Naive thymus-derived CD4-positive, alpha-beta T cell (primary cell): ENCODE measurements at regions of chr10 and their contacts with region 1.

Region 1: GRCh38 chr10:93916257-93917063 is 22.7 kb downstream of the SLC35G1 start:
- DNase-seq: no peak
- ATAC-seq: no peak
- H3K4me3 ChIP-seq: no peak overlapping the region
- H3K4me3 Mint-ChIP-seq: peak overlapping the region in 3 of 10 donors; percentile 15 to 42 (median 40)
- H3K27ac ChIP-seq: no peak overlapping the region
- H3K27ac Mint-ChIP-seq: peak overlapping the region in 1 of 9 donors; percentile 67
- H3K4me1 ChIP-seq: no peaks in the 10 kb centered on the region
- H3K4me1 Mint-ChIP-seq: peaks cover 0 to 7% (median 2%) of the 10 kb centered on the region in 7 donors
- H3K27me3 ChIP-seq: no peaks in the 10 kb centered on the region
- H3K27me3 Mint-ChIP-seq: no peaks in the 10 kb centered on the region

Region 2: DNA sequence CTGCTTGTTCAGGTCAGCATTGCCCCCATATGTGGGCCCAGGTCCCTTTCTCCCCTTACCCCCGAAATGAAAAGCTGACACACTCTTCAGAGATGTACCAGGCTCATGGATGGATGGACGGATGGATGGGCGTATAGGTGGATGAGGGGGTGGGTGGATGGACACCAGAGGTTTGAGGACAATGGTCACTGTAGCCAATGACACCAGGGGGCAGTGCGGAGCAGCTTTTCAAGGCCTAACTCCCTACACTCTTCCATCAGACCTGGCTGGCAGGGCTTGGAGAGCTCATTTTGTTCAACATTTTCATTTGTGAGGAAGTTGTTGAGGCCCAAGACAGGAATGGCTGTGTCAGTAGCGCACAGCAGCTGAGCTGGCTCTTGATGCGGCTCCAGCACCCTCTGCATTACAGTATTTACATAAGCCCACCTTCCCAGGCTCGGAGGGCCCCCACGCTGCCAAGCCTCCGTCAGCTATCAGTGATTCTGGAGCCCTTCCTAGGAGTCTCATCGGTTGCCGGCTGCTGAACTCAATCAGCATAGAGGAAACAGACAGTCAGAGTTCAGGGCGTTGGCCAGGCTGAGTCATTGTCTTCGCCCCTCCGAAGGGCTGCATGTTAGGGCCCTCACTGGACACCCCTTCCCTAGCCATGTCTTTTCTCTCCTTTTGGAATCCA is 361.6 kb before region 1 on chr10:
- CTCF ChIA-PET with region 1: interaction called, 3 read pairs
- POLR2A ChIA-PET with region 1: no interaction called
- intact Hi-C with region 1: loop called in 1 of 2 experiments (anchors 2 kb)
- DNase-seq: peak in 4 of 9 donors; percentile 12 to 37 (median 22)
- ATAC-seq: peak; percentile 83
- H3K4me3 ChIP-seq: no peak overlapping the region
- H3K4me3 Mint-ChIP-seq: no peak overlapping the region
- H3K27ac ChIP-seq: no peak overlapping the region
- H3K27ac Mint-ChIP-seq: no peak overlapping the region
- H3K4me1 ChIP-seq: no peaks in the 10 kb centered on the region
- H3K4me1 Mint-ChIP-seq: peaks cover 0 to 5% (median 0%) of the 10 kb centered on the region in 7 donors
- H3K27me3 ChIP-seq: no peaks in the 10 kb centered on the region
- H3K27me3 Mint-ChIP-seq: peaks cover 0 to 18% (median 10%) of the 10 kb centered on the region in 5 donors

Region 3: GRCh38 chr10:93697207-93697606 is 219.3 kb before region 1 on chr10:
- CTCF ChIA-PET with region 1: no interaction called
- POLR2A ChIA-PET with region 1: no interaction called
- intact Hi-C with region 1: loop called in 1 of 2 experiments (anchors 1 kb)
- DNase-seq: no peak
- ATAC-seq: no peak
- H3K4me3 ChIP-seq: no peak overlapping the region
- H3K4me3 Mint-ChIP-seq: no peak overlapping the region
- H3K27ac ChIP-seq: no peak overlapping the region
- H3K27ac Mint-ChIP-seq: no peak overlapping the region
- H3K4me1 ChIP-seq: peaks cover 9 to 16% of the 10 kb centered on the region in 2 donors
- H3K4me1 Mint-ChIP-seq: peaks cover 9 to 40% (median 23%) of the 10 kb centered on the region in 7 donors
- H3K27me3 ChIP-seq: no peaks in the 10 kb centered on the region
- H3K27me3 Mint-ChIP-seq: no peaks in the 10 kb centered on the region

Region 4: DNA sequence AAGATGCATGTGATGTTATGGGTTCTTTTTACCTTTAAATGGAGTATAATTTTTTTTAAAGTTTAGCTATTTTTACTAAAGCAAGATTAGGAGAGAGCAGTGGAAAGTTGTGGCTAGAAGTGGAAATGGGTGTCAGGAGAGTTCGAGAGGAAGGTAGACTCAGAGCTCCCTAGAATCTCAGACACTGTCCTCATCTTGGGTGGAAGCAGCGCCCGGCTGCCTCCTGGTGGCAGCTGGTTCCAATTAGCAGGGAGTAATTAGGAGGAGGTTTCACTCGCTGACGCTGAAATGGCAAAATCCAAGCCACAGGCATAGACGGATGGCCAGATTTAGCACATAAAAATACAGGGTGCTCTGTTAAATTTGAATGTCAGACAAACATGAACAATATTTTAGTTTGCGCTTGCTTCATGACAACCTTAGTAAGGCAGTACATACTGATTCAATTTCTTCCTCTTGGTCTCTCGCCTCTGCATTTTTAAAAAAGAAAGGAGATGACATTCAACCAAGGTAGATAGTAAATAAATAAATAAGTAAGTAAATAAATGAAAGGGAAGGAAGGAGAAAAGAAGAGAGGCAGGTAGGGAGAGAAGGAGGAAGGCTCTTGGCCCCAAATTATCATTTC is 100.2 kb before region 1 on chr10:
- CTCF ChIA-PET with region 1: interaction called, 3 read pairs
- POLR2A ChIA-PET with region 1: no interaction called
- intact Hi-C with region 1: loop called in 1 of 2 experiments (anchors 5 kb)
- DNase-seq: peak in 6 of 9 donors; percentile 2 to 22 (median 8)
- ATAC-seq: peak; percentile 57
- H3K4me3 ChIP-seq: no peak overlapping the region
- H3K4me3 Mint-ChIP-seq: no peak overlapping the region
- H3K27ac ChIP-seq: no peak overlapping the region
- H3K27ac Mint-ChIP-seq: no peak overlapping the region
- H3K4me1 ChIP-seq: no peaks in the 10 kb centered on the region
- H3K4me1 Mint-ChIP-seq: peaks cover 0 to 13% (median 8%) of the 10 kb centered on the region in 7 donors
- H3K27me3 ChIP-seq: peaks cover 0 to 4% of the 10 kb centered on the region in 2 donors
- H3K27me3 Mint-ChIP-seq: peaks cover 35 to 50% (median 45%) of the 10 kb centered on the region in 5 donors

Region 5: DNA sequence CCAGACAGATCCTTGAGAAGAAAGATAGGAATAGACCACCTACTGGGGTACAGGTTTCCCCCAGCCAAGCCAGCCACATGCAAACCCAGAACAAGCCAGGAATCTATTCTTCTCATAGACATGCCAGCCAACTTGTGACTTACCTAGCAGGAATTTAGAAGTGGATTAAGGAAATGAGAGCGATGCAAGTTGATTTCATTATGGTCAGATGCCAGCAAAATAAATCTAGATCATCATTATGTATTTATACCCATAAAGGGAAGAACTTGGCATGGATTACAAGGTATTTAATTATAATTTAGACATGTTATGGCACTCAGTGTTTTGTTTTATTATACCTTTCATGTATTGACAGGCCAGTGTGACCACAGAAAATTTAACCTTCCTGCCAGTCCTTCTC is 10.2 kb after region 1 on chr10:
- CTCF ChIA-PET with region 1: no interaction called
- POLR2A ChIA-PET with region 1: no interaction called
- intact Hi-C with region 1: no loop called
- DNase-seq: no peak
- ATAC-seq: no peak
- H3K4me3 ChIP-seq: no peak overlapping the region
- H3K4me3 Mint-ChIP-seq: peak overlapping the region in 1 of 10 donors; percentile 41
- H3K27ac ChIP-seq: no peak overlapping the region
- H3K27ac Mint-ChIP-seq: no peak overlapping the region
- H3K4me1 ChIP-seq: no peaks in the 10 kb centered on the region
- H3K4me1 Mint-ChIP-seq: no peaks in the 10 kb centered on the region
- H3K27me3 ChIP-seq: no peaks in the 10 kb centered on the region
- H3K27me3 Mint-ChIP-seq: peaks cover 0 to 10% (median 2%) of the 10 kb centered on the region in 5 donors

Region 6: DNA sequence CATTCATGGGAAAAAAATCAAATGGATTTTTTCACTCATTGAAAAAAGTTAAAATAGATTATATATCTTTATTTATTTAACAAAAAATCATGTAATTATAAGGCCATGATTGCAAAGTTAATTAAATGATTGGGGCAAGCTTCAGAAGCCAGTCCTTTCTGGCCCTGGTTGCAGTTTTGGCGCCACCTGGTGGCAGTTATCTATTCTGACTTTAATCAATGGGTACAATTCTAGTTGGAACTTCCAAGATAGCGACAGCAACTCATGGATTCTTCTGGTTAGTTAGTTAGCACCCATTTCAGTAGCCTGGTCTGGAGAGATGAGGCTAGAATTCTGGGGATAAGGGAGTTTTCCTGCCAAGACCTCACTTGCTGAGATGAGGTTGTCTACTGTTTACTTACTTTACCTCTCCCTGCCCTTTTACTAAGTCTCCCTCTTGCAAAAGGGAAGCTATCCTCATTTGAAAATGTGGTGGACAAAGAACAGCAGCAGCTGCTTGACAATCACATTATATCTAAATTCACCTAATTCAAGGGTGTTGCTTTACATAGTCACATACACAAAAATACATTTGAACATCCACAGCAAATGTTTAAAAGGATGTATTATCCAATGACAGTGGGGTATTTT is 403.9 kb after region 1 on chr10:
- CTCF ChIA-PET with region 1: interaction called, 11 read pairs
- POLR2A ChIA-PET with region 1: no interaction called
- intact Hi-C with region 1: no loop called
- DNase-seq: peak; percentile 15 to 57 (median 40)
- ATAC-seq: peak; percentile 41
- H3K4me3 ChIP-seq: no peak overlapping the region
- H3K4me3 Mint-ChIP-seq: no peak overlapping the region
- H3K27ac ChIP-seq: no peak overlapping the region
- H3K27ac Mint-ChIP-seq: peak overlapping the region in 1 of 9 donors; percentile 19
- H3K4me1 ChIP-seq: no peaks in the 10 kb centered on the region
- H3K4me1 Mint-ChIP-seq: no peaks in the 10 kb centered on the region
- H3K27me3 ChIP-seq: no peaks in the 10 kb centered on the region
- H3K27me3 Mint-ChIP-seq: no peaks in the 10 kb centered on the region

Region 7: DNA sequence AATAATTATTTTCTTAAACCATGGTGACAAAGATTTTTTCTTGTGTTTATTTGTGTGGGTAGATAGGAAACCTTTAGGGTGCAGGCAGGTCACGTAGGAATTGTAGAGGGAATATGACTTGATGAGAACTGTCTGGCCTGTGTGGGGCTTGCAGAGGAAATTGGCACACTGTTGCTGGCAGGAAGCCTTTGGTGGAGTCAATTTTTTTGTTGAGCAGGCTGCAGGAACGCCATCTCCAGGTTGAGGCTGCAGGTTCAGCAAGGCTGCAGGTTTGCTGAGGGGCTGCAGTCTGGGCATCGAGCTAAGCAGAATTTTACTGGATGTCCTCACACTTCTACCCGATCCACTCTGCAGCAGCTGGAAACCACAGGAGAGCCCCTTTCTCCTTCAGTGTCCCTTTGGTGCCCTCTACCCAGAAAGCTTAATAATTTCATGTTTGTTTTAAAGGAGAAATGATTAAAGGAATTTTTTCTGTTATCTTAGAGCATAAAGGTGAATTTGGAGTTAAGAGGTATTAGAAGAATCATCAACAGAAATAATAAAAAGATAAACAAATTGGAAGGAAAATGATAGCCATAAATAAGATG is 522.9 kb after region 1 on chr10:
- CTCF ChIA-PET with region 1: no interaction called
- POLR2A ChIA-PET with region 1: no interaction called
- intact Hi-C with region 1: loop called in 1 of 2 experiments (anchors 5 kb)
- DNase-seq: no peak
- ATAC-seq: no peak
- H3K4me3 ChIP-seq: no peak overlapping the region
- H3K4me3 Mint-ChIP-seq: no peak overlapping the region
- H3K27ac ChIP-seq: no peak overlapping the region
- H3K27ac Mint-ChIP-seq: no peak overlapping the region
- H3K4me1 ChIP-seq: no peaks in the 10 kb centered on the region
- H3K4me1 Mint-ChIP-seq: no peaks in the 10 kb centered on the region
- H3K27me3 ChIP-seq: peaks cover 0 to 3% of the 10 kb centered on the region in 2 donors
- H3K27me3 Mint-ChIP-seq: peaks cover 7 to 29% (median 25%) of the 10 kb centered on the region in 5 donors